ENCODE measurements at regions of chr2 and their contacts with region 1.

Region 1: DNA sequence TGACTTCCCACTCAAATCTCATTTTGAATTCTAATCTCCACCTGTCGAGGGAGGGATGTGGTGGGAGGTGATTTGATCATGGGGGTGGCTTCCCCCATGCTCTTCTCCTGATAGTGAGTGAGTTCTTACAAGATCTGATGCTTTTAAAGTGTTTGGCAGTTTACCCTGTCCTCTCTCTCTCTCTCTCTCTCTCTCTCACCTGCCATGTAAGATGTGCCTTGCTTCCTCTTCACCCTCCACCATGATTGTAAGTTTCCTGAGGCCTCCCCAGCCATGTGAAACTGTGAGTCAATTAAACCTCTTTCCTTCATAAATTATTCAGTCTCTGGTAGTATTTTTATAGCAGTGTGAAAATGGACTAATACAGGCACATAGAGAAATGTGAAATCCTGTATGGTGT is 7.0 kb upstream of the LDAH start:
- DNase-seq: no peak
- H3K4me3 ChIP-seq: no peak overlapping the region
- H3K27ac ChIP-seq: no peak overlapping the region
- H3K4me1 ChIP-seq: no peaks in the 10 kb centered on the region
- H3K27me3 ChIP-seq: no peaks in the 10 kb centered on the region
- CTCF ChIP-seq: no peak
- EP300 ChIP-seq: no peak
- POLR2A ChIP-seq: no peak

Region 2: DNA sequence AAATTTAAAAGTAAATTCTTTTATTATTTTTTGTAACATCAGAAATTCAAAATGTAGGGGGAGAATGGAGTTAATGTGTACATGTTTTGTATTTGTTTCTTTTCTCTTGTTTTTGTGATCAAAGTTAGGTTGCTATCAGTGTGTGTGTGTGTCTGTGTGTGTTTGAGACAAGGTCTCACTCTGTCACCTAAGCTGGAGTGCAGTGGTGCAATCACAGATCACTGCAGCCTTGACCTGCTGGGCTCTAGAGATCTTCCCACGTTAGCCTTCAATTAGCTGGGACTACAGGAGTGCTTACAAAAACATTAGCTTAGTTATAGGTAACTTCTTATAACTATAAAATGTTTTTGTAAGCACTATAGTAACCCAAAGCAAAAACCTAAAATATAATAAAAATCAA is 112.2 kb before region 1 on chr2:
- intact Hi-C with region 1: no loop called
- DNase-seq: no peak
- H3K4me3 ChIP-seq: no peak overlapping the region
- H3K27ac ChIP-seq: no peak overlapping the region
- H3K4me1 ChIP-seq: no peaks in the 10 kb centered on the region
- H3K27me3 ChIP-seq: no peaks in the 10 kb centered on the region
- CTCF ChIP-seq: no peak
- EP300 ChIP-seq: no peak
- POLR2A ChIP-seq: no peak

Region 3: GRCh38 chr2:20812779-20813178 is 17.1 kb before region 1 on chr2:
- intact Hi-C with region 1: loop called in 1 of 4 experiments (anchors 2 kb)
- DNase-seq: no peak
- H3K4me3 ChIP-seq: no peak overlapping the region
- H3K27ac ChIP-seq: no peak overlapping the region
- H3K4me1 ChIP-seq: no peaks in the 10 kb centered on the region
- H3K27me3 ChIP-seq: no peaks in the 10 kb centered on the region
- CTCF ChIP-seq: no peak
- EP300 ChIP-seq: no peak
- POLR2A ChIP-seq: no peak

Region 4: GRCh38 chr2:20990442-20991430 is 160.9 kb after region 1 on chr2:
- intact Hi-C with region 1: no loop called
- DNase-seq: no peak
- H3K4me3 ChIP-seq: no peak overlapping the region
- H3K27ac ChIP-seq: no peak overlapping the region
- H3K4me1 ChIP-seq: no peaks in the 10 kb centered on the region
- H3K27me3 ChIP-seq: no peaks in the 10 kb centered on the region
- CTCF ChIP-seq: no peak
- EP300 ChIP-seq: no peak
- POLR2A ChIP-seq: no peak